Mammary epithelial cell (primary cell): ENCODE measurements at regions of chr9 and their contacts with region 1.

Region 1: DNA sequence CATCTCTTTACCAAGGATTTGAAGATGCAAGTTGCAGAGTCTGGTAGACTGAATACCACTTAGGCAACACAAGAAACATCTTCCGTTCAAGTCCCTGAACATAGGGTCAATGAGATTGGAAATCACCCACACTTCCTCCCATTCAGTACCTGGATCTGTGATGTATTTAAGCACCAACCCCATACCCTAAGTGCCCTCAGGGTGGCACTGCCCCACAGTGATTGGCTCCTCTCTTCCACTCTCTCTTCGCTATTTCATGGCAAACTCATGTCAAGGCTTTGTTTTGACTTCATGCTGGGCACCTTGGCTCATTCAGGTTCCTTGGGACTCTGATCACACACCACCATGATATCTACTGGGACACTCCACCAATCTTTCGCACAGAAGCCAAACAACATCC is 53.7 kb downstream of the GGTA1 start:
- DNase-seq: no peak
- H3K4me3 ChIP-seq: no peak overlapping the region
- H3K27ac ChIP-seq: no peak overlapping the region
- H3K4me1 ChIP-seq: peaks cover 13% of the 10 kb centered on the region
- H3K27me3 ChIP-seq: peaks cover 11% of the 10 kb centered on the region
- CTCF ChIP-seq: peak in 1 of 2 donors; percentile 23

Region 2: GRCh38 chr9:121463026-121463807 is 17.2 kb after region 1 on chr9:
- CTCF ChIA-PET with region 1: interaction called, 30 read pairs
- dilution Hi-C with region 1: no loop called
- in situ Hi-C with region 1: no loop called
- intact Hi-C with region 1: no loop called
- DNase-seq: no peak
- H3K4me3 ChIP-seq: no peak overlapping the region
- H3K27ac ChIP-seq: no peak overlapping the region
- H3K4me1 ChIP-seq: no peaks in the 10 kb centered on the region
- H3K27me3 ChIP-seq: peaks cover 10% of the 10 kb centered on the region
- CTCF ChIP-seq: peak; percentile 59 to 74

Region 3: GRCh38 chr9:121529237-121529987 is 83.4 kb after region 1 on chr9:
- CTCF ChIA-PET with region 1: no interaction called
- dilution Hi-C with region 1: loop called (anchors 5 kb)
- in situ Hi-C with region 1: no loop called
- intact Hi-C with region 1: no loop called
- DNase-seq: peak; percentile 77
- H3K4me3 ChIP-seq: no peak overlapping the region
- H3K27ac ChIP-seq: no peak overlapping the region
- H3K4me1 ChIP-seq: peaks cover 6% of the 10 kb centered on the region
- H3K27me3 ChIP-seq: no peaks in the 10 kb centered on the region
- CTCF ChIP-seq: no peak

Region 4: DNA sequence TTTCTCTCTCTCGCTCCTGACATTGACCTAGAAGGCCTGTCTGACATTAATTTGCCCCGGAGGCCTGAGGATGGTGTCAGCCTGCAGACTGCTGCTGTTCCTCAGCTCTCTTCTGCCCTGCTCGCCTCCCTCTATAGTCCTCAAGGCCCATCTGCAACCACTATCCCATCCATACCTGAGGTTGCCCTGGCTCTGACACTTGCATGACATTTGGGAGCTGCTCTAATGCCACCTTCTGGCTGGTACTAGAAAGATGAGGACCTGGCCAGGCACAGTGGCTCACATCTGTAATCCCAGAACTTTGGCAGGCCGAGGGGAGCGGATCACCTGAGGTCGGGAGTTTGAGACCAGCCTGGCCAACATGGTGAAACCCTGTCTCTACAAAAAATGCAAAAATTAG is 92.3 kb after region 1 on chr9:
- CTCF ChIA-PET with region 1: no interaction called
- dilution Hi-C with region 1: no loop called
- in situ Hi-C with region 1: no loop called
- intact Hi-C with region 1: loop called (anchors 5 kb)
- DNase-seq: no peak
- H3K4me3 ChIP-seq: no peak overlapping the region
- H3K27ac ChIP-seq: no peak overlapping the region
- H3K4me1 ChIP-seq: no peaks in the 10 kb centered on the region
- H3K27me3 ChIP-seq: no peaks in the 10 kb centered on the region
- CTCF ChIP-seq: peak; percentile 13 to 47